Naive thymus-derived CD4-positive, alpha-beta T cell (primary cell): ENCODE measurements at regions of chr11 and their contacts with region 1.

Region 1: DNA sequence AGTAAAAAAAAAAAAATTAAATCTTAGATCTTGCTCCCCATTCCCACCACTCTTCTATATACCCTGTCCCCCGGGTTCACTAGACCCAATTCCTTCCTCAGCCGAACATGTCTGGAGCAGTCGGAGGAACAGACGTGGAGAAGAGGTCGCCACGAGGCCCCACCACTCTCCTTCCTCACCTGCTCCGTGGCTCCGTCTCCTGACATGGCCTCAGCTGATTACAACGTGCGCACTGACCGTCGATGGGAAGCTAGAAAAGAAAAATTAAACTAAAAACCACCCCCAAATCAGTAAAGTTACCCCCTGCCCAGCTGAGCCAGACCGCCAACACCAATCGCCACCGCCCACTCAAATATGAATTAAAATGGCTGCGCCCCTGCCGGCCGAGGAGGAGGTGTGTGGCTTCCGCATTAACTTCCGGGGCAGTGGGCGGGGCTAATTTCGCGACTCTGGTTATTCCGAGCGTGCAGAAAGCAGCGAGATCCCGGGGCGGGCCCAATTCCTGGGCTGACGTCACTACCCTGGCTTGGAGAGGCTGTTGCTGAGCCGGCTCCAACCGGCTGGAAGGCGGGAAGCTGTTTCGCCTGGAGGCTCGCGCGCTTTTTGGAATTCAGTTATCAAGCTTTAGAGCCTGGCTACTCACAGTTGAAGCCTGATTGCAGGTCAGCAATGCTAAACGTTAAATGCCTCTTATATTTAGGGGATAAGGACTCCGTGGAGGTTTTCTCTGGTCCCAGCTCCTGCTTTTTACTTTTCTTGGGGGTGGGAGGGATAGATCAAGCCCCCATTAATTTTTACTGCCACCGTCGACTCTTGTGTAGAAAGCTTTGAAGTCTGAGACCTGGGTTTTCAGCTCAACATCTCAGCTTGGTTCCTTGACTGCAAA is at the start of gene CSTF3:
- DNase-seq: peak; percentile 84 to 95 (median 89)
- ATAC-seq: peak; percentile 98
- H3K4me3 ChIP-seq: peak within 1 kb of the TSS; percentile 97
- H3K4me3 Mint-ChIP-seq: peak within 1 kb of the TSS; percentile 95 to 100 (median 100)
- H3K27ac ChIP-seq: peak within 1 kb of the TSS; percentile 84
- H3K27ac Mint-ChIP-seq: peak within 1 kb of the TSS; percentile 95 to 100 (median 99)
- H3K4me1 ChIP-seq: peaks cover 11 to 19% of the 10 kb centered on the region in 2 donors
- H3K4me1 Mint-ChIP-seq: peaks cover 40 to 64% (median 55%) of the 10 kb centered on the region in 7 donors
- H3K27me3 ChIP-seq: no peaks in the 10 kb centered on the region
- H3K27me3 Mint-ChIP-seq: no peaks in the 10 kb centered on the region
- total RNA-seq, gene CSTF3: 14.6 to 38.6 (median 28.7) TPM

Region 2: GRCh38 chr11:31509429-31510345 is 1651.7 kb before region 1 on chr11 and contains the starts of genes ELP4 and IMMP1L:
- CTCF ChIA-PET with region 1: no interaction called
- POLR2A ChIA-PET with region 1: no interaction called
- intact Hi-C with region 1: loop called in 1 of 2 experiments (anchors 2 kb)
- DNase-seq: peak; percentile 86 to 97 (median 95)
- ATAC-seq: peak; percentile 100
- H3K4me3 ChIP-seq: peak within 1 kb of the TSS; percentile 85
- H3K4me3 Mint-ChIP-seq: peak within 1 kb of the TSS; percentile 89 to 100 (median 99)
- H3K27ac ChIP-seq: peak within 1 kb of the TSS; percentile 79
- H3K27ac Mint-ChIP-seq: peak within 1 kb of the TSS; percentile 92 to 100 (median 98)
- H3K4me1 ChIP-seq: peaks cover 13 to 14% of the 10 kb centered on the region in 2 donors
- H3K4me1 Mint-ChIP-seq: peaks cover 21 to 70% (median 49%) of the 10 kb centered on the region in 7 donors
- H3K27me3 ChIP-seq: no peaks in the 10 kb centered on the region
- H3K27me3 Mint-ChIP-seq: peaks cover 0 to 2% (median 0%) of the 10 kb centered on the region in 5 donors
- total RNA-seq, gene ELP4: 16.8 to 23.2 (median 21.2) TPM
- total RNA-seq, gene IMMP1L: 9.4 to 20.0 (median 16.1) TPM

Region 3: GRCh38 chr11:32960553-32961164 is 200.7 kb before region 1 on chr11:
- CTCF ChIA-PET with region 1: no interaction called
- POLR2A ChIA-PET with region 1: no interaction called
- intact Hi-C with region 1: loop called (anchors 1 to 2 kb)
- DNase-seq: peak in 7 of 9 donors; percentile 33 to 66 (median 55)
- ATAC-seq: peak; percentile 67
- H3K4me3 ChIP-seq: no peak overlapping the region
- H3K4me3 Mint-ChIP-seq: no peak overlapping the region
- H3K27ac ChIP-seq: no peak overlapping the region
- H3K27ac Mint-ChIP-seq: no peak overlapping the region
- H3K4me1 ChIP-seq: no peaks in the 10 kb centered on the region
- H3K4me1 Mint-ChIP-seq: peaks cover 0 to 5% (median 0%) of the 10 kb centered on the region in 7 donors
- H3K27me3 ChIP-seq: no peaks in the 10 kb centered on the region
- H3K27me3 Mint-ChIP-seq: no peaks in the 10 kb centered on the region

Region 4: DNA sequence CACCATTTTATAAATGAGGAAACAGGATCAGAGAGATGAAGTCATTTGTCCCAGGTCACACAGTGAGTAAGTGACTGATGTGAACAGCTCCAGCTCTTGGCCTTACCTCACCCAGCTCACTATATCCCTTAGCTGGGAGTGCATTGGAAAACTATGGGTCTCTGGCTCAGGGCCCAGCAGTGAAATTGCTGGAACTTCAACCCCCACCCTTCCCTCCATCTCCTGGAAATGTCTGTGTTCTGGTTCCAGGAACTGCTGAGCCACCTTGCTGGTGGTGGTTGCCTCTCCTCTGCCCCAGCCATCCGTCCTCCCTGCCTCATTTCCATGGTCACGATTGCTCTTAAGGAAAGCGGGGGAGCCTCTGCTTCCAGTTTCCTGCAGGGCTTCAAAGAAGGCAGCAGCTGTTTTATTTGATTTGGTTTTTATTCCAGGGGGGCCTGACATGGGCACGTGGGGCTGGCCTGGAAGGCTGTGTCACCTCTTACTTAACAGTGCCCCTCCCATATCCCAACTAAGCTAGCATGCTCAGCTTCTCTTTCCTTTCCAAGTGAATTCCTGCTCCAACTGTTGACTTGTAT is 46.1 kb after region 1 on chr11:
- CTCF ChIA-PET with region 1: no interaction called
- POLR2A ChIA-PET with region 1: no interaction called
- intact Hi-C with region 1: no loop called
- DNase-seq: no peak
- ATAC-seq: no peak
- H3K4me3 ChIP-seq: no peak overlapping the region
- H3K4me3 Mint-ChIP-seq: no peak overlapping the region
- H3K27ac ChIP-seq: no peak overlapping the region
- H3K27ac Mint-ChIP-seq: no peak overlapping the region
- H3K4me1 ChIP-seq: no peaks in the 10 kb centered on the region
- H3K4me1 Mint-ChIP-seq: peaks cover 0 to 7% (median 0%) of the 10 kb centered on the region in 7 donors
- H3K27me3 ChIP-seq: no peaks in the 10 kb centered on the region
- H3K27me3 Mint-ChIP-seq: peaks cover 0 to 4% (median 0%) of the 10 kb centered on the region in 5 donors

Region 5: GRCh38 chr11:33257897-33258630 is 96.7 kb after region 1 on chr11:
- CTCF ChIA-PET with region 1: interaction called, 3 read pairs
- POLR2A ChIA-PET with region 1: interaction called, 5 read pairs
- intact Hi-C with region 1: loop called (anchors 1 kb)
- DNase-seq: peak; percentile 67 to 83 (median 76)
- ATAC-seq: peak; percentile 71
- H3K4me3 ChIP-seq: peak overlapping the region; percentile 63
- H3K4me3 Mint-ChIP-seq: peak overlapping the region; percentile 89 to 99 (median 96)
- H3K27ac ChIP-seq: peak overlapping the region; percentile 97
- H3K27ac Mint-ChIP-seq: peak overlapping the region; percentile 93 to 99 (median 98)
- H3K4me1 ChIP-seq: peaks cover 27 to 28% of the 10 kb centered on the region in 2 donors
- H3K4me1 Mint-ChIP-seq: peaks cover 25 to 55% (median 44%) of the 10 kb centered on the region in 7 donors
- H3K27me3 ChIP-seq: no peaks in the 10 kb centered on the region
- H3K27me3 Mint-ChIP-seq: peaks cover 0 to 2% (median 0%) of the 10 kb centered on the region in 5 donors

Region 6: DNA sequence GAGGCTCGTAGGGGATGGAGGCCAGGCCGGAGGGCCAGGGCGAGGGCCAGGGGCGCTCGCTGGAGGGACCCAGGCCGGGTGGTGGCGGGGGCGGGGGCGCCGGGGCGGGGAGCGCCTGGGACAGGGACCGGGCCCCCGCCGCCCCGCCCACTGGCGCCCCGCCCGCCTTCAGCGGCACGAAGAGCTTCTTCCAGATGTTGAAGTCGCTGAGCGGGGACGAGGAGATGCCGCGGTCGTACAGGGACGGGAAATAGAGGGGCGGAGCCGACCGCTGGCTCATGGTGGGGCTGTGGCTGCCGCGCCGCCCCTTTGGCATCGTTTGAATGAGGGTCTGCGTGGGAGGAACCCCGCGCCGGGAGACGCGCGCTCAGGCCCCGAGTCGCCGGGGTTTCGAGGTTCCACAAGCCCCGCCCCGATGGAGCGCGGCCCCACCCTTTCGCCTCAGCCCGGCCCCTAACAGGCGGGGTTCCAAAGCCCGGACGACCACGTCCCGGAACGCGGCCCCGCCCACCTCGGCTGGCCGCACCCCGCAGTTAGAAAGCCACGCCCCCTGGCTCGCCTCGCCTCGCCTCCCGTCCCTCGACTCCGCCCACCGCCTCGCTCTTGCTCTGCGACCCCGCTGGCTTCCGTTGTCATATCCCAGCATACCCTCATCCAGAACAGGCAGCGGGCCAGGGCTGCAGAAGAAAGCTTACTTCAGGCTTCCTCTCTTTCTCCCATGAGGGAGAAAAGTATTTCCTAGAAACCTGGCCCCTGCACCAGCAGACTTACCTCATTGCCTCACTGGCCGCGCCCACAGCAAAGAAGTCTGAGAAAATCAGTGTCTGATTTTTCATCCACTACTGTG is 539.3 kb after region 1 on chr11 and contains the start of gene C11orf91:
- CTCF ChIA-PET with region 1: no interaction called
- POLR2A ChIA-PET with region 1: no interaction called
- intact Hi-C with region 1: loop called (anchors 2 kb)
- DNase-seq: peak; percentile 88 to 98 (median 95)
- ATAC-seq: peak; percentile 99
- H3K4me3 ChIP-seq: peak within 1 kb of the TSS; percentile 54
- H3K4me3 Mint-ChIP-seq: peak within 1 kb of the TSS; percentile 84 to 96 (median 92)
- H3K27ac ChIP-seq: no peak within 1 kb of the TSS
- H3K27ac Mint-ChIP-seq: peak within 1 kb of the TSS; percentile 61 to 84 (median 76)
- H3K4me1 ChIP-seq: peaks cover 9 to 13% of the 10 kb centered on the region in 2 donors
- H3K4me1 Mint-ChIP-seq: peaks cover 14 to 27% (median 23%) of the 10 kb centered on the region in 7 donors
- H3K27me3 ChIP-seq: no peaks in the 10 kb centered on the region
- H3K27me3 Mint-ChIP-seq: peaks cover 0 to 31% (median 5%) of the 10 kb centered on the region in 5 donors
- total RNA-seq, gene C11orf91: not detected

Region 7: DNA sequence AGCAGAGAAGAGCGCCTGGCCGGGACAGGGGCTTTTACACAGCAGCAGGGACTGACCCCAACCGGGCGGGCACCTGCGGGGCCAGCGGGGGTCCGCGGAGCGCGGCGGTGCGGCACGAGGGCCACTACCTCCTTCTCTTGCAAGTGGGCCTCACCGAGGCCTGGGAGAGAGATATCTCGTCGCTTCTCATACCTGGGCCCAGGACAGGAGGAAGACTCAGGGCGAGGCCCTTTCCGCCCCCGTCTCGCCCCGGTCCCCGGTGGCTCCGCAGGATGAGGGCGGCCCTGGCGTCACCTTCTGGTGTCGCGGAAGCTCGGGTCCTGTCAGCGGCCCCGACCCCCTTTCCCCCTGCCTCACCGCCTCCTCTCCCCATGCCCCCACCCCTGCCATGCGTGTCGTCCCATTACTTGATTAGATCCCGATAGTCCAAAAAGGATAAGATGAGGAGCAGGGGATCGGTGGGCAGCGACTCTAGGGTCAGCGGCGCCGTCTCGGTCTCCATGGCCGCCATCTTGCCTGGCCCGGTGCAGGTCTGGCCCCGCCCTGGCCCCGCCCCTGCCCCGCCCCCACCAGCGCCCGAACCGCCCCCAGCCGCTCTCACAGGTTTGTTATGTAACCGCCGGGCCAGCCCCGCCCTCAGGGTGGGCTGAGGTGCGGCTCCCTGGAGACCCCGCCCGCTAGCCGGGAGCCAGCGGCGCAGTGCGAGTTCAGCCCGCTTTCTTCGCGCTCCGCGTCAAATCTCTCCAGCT is 612.8 kb after region 1 on chr11 and contains the start of gene FBXO3:
- CTCF ChIA-PET with region 1: no interaction called
- POLR2A ChIA-PET with region 1: no interaction called
- intact Hi-C with region 1: loop called in 1 of 2 experiments (anchors 1 kb)
- DNase-seq: peak; percentile 71 to 91 (median 88)
- ATAC-seq: peak; percentile 98
- H3K4me3 ChIP-seq: peak within 1 kb of the TSS; percentile 91
- H3K4me3 Mint-ChIP-seq: peak within 1 kb of the TSS; percentile 93 to 99 (median 97)
- H3K27ac ChIP-seq: peak within 1 kb of the TSS; percentile 83
- H3K27ac Mint-ChIP-seq: peak within 1 kb of the TSS; percentile 93 to 98 (median 96)
- H3K4me1 ChIP-seq: peaks cover 20 to 23% of the 10 kb centered on the region in 2 donors
- H3K4me1 Mint-ChIP-seq: peaks cover 33 to 58% (median 45%) of the 10 kb centered on the region in 7 donors
- H3K27me3 ChIP-seq: no peaks in the 10 kb centered on the region
- H3K27me3 Mint-ChIP-seq: peaks cover 0 to 34% (median 7%) of the 10 kb centered on the region in 5 donors
- total RNA-seq, gene FBXO3: 22.6 to 55.7 (median 47.7) TPM